ENCODE measurements at regions of chr19 and their contacts with region 1.

Region 1: GRCh38 chr19:13597640-13598039 is 91.4 kb upstream of the CACNA1A start:
- DNase-seq: peak in 1 of 2 donors; percentile 19
- ATAC-seq: peak; percentile 42 to 63 (median 58)
- H3K4me3 ChIP-seq: no peak overlapping the region
- H3K27ac ChIP-seq: no peak overlapping the region
- H3K4me1 ChIP-seq: no peaks in the 10 kb centered on the region
- H3K27me3 ChIP-seq: no peaks in the 10 kb centered on the region
- CTCF ChIP-seq: peak; percentile 54

Region 2: DNA sequence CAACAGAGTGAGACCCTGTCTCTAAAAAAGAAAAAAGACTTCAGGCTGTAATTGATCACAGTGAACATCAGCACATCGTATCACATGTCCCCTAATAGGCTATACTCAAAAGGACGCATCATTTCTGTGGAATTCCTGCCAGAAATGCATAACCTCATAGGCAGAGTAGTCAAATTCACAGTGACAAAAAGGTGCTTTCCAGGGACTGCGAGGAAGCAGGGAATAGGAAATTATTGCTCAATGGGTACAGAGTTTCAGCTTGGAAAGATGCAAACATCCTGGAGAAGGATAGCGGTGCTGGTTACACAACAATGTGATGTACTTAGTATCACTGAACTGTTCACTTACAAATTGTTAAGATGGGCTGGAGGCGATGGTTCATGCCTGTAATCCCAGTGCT is 125.6 kb after region 1 on chr19:
- intact Hi-C with region 1: loop called in 1 of 2 experiments (anchors 5 kb)
- DNase-seq: no peak
- ATAC-seq: no peak
- H3K4me3 ChIP-seq: no peak overlapping the region
- H3K27ac ChIP-seq: no peak overlapping the region
- H3K4me1 ChIP-seq: no peaks in the 10 kb centered on the region
- H3K27me3 ChIP-seq: peaks cover 0 to 6% (median 0%) of the 10 kb centered on the region in 3 donors
- CTCF ChIP-seq: no peak

Region 3: DNA sequence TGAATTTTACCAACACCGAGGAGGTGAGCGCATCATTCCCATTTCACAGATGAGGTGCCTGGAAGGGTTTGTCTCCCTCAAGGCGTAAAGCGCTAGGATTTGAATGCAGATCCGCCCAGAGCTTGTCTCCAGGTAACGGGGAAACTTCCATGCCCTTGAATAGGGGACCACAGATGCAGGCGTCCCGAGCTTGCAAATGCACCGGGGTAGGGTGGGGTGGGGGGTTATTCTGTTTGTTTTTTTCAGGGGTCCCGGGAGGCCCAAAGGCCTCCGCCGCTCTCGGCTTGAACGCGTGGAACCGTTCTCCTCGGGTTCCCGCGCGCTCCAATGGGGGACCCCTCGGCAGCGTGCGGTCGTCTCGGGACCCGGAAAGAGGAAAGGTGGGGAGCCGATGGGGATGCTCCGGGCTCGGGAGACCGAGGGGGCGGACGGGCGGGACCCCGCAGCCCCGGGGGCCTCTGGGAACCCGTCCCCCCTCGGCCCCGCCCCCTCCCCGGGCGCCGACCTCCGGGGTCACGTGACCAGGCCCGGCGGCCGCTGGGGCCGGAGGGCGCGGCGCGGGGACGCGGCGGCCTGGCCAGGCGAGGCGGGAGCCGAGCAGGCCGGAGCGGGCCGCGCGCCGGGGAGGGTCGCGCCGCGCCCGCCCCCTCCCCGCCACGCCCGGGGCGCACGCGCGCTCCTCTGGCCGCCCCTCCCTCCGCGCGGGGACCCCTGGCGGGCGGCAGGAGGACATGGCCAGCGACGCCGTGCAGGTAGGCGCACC is 835.3 kb after region 1 on chr19 and contains the start of gene PKN1:
- intact Hi-C with region 1: no loop called
- DNase-seq: peak; percentile 71 to 74
- ATAC-seq: peak; percentile 55 to 75 (median 68)
- H3K4me3 ChIP-seq: peak within 1 kb of the TSS; percentile 91
- H3K27ac ChIP-seq: peak within 1 kb of the TSS; percentile 59
- H3K4me1 ChIP-seq: peaks cover 10% of the 10 kb centered on the region
- H3K27me3 ChIP-seq: no peaks in the 10 kb centered on the region
- CTCF ChIP-seq: peak; percentile 18
- total RNA-seq, gene PKN1: 61.1 to 136 (median 102) TPM